PC-9 (cell line): ENCODE measurements at regions of chr17 and their contacts with region 1.

Region 1: DNA sequence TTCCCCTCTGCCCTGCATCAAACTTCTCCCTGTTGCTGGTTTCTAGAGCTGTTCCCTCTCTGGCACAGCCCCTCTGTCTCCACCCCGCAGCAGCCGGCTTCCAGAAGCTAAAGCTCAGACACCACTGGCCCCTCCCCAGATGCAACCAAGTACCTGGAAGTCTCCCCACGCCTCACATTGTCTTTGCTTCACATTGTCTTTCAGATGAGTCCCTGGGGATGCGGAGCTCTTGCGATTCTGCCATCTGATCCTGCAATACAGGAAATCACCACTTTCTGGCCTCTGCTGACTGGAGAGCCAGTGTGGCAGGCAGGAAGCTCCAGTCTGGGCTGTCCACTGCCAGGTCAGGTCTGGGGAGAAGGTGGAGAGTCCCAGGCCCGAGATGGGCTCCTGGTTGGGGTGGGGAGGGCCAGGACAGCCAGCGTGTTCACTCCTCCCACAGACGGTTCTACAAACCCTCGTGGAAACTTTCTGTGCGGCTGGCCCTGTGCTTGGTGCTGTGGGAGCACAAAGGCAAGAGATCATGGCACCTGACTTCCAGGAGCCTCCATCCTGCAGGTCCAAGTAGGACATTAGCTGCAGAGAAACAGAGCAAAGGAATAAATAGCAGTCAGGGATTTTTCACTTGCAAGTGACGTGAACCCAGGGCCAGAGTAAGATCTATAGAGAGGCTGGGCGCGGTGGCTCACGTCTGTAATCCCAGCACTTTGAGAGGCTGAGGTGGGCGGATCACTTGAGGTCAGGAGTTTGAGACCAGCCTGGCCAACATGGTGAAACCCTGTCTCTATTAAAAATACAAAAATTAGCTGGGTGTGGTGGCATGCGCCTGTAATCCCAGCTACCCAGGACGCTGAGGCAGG is 47.9 kb upstream of the MAP3K14 start:
- DNase-seq: no peak
- H3K4me3 ChIP-seq: no peak overlapping the region
- H3K27ac ChIP-seq: no peak overlapping the region
- H3K4me1 ChIP-seq: peaks cover 14% of the 10 kb centered on the region
- H3K27me3 ChIP-seq: no peaks in the 10 kb centered on the region
- CTCF ChIP-seq: no peak

Region 2: DNA sequence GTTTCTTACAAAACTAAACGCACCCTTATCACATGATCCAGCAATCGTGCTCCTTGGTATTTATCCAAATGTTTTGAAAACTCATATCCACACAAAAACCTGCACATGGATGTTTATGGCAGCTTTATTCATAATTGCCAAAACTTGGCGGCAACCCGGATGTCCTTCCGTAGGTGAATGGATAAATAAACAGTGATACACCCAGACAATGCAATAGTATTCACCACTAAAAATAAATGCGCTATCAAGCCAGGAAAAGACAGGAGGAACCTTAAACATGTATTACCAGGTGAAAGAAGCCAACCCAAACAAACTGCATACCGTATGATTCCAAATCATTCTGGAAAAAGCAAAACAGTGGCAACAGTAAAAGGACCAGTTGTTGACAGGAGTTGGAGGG is 112.8 kb before region 1 on chr17:
- CTCF ChIA-PET with region 1: no interaction called
- POLR2A ChIA-PET with region 1: interaction called, 22 read pairs
- intact Hi-C with region 1: no loop called
- DNase-seq: no peak
- H3K4me3 ChIP-seq: no peak overlapping the region
- H3K27ac ChIP-seq: no peak overlapping the region
- H3K4me1 ChIP-seq: peaks cover 8% of the 10 kb centered on the region
- H3K27me3 ChIP-seq: no peaks in the 10 kb centered on the region
- CTCF ChIP-seq: no peak

Region 3: GRCh38 chr17:45410144-45411091 is 45.7 kb after region 1 on chr17:
- CTCF ChIA-PET with region 1: no interaction called
- POLR2A ChIA-PET with region 1: no interaction called
- intact Hi-C with region 1: no loop called
- DNase-seq: no peak
- H3K4me3 ChIP-seq: no peak overlapping the region
- H3K27ac ChIP-seq: no peak overlapping the region
- H3K4me1 ChIP-seq: no peaks in the 10 kb centered on the region
- H3K27me3 ChIP-seq: no peaks in the 10 kb centered on the region
- CTCF ChIP-seq: no peak

Region 4: DNA sequence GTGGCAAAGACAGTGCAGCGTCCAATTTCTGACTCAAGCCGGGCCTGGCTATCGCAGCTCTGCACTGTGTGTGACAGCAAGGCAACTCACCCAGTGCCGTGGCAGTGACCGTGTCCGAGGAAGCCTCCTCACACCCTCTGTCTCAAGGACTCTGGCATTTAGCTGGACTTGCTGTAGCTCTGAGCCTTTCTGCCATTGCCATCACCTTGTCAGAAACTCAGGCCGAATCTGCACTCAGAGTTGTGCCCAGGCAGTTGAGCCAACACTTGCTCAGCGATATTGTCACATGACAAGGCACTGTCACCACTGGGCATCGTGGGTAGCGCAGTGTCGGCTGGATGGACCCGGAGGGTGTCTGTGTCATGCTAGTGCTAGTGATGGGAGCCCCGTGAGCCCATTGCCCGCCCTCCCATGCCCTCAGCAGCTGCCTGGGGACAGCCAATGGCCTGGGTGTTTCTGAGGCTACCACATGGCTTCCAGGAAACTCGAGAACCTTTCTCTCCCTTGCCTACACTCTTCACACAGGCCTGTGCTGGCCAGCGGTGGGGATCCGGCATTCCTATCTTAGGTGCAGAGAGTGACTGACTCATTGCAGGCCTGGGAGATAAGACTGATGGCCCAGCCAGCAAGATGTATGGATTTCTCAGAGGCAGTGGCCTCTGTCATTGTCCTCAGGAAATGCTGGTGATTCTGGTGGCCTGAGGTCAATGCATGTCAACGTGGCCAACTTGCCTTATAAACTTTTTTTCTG is 612.2 kb after region 1 on chr17:
- CTCF ChIA-PET with region 1: no interaction called
- POLR2A ChIA-PET with region 1: no interaction called
- intact Hi-C with region 1: no loop called
- DNase-seq: peak; percentile 41 to 53
- H3K4me3 ChIP-seq: no peak overlapping the region
- H3K27ac ChIP-seq: no peak overlapping the region
- H3K4me1 ChIP-seq: no peaks in the 10 kb centered on the region
- H3K27me3 ChIP-seq: peaks cover 40% of the 10 kb centered on the region
- CTCF ChIP-seq: no peak